AG04449 (cell line): ENCODE measurements at regions of chr12 and their contacts with region 1.

Region 1: GRCh38 chr12:9750276-9751203 is 10.2 kb downstream of the CD69 start:
- DNase-seq: no peak
- H3K4me3 ChIP-seq: no peak overlapping the region
- CTCF ChIP-seq: peak; percentile 67

Region 2: GRCh38 chr12:9721394-9722092 is 29.0 kb before region 1 on chr12:
- CTCF ChIA-PET with region 1: interaction called, 10 read pairs
- POLR2A ChIA-PET with region 1: no interaction called
- DNase-seq: no peak
- H3K4me3 ChIP-seq: no peak overlapping the region
- CTCF ChIP-seq: no peak

Region 3: DNA sequence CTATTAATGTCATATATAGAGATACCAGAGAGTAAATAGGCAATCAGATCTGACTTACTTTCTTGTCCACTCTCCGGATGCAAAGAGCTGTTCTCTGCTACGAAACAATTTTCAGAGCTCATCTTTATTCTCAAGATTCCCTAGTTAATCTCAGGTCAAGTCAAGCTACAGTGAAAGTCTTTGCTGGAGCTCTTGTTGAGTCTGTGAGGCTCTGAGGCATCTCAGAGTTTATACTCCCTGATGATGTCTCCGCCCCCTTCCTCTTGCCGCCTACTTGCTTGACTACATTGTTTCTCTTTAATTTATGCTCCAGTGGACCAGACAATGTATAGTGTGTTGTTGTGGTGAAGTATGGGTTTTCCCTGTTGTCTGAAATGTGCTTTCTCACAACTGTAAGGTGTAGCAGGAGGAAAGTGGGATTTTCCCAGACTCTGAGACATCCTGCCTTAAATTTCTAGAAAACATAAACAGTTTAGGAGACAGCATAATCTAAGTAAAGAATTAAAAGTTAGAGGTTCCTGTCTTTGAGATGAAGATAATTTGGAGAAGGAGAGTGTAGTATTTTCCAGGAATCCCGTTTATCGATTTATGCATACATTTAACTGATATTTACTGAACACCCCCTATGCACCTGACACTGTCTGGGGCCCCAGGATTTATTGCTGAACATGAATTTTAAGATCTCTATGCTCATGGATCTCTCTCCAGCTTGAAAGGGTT is 10.3 kb after region 1 on chr12 and contains the start of gene CD69:
- CTCF ChIA-PET with region 1: interaction called, 66 read pairs
- POLR2A ChIA-PET with region 1: no interaction called
- DNase-seq: no peak
- H3K4me3 ChIP-seq: no peak within 1 kb of the TSS
- CTCF ChIP-seq: no peak

Region 4: GRCh38 chr12:9784816-9785215 is 34.3 kb after region 1 on chr12:
- CTCF ChIA-PET with region 1: no interaction called
- POLR2A ChIA-PET with region 1: no interaction called
- DNase-seq: no peak
- H3K4me3 ChIP-seq: no peak overlapping the region
- CTCF ChIP-seq: no peak

Region 5: GRCh38 chr12:9797722-9798619 is 47.4 kb after region 1 on chr12:
- CTCF ChIA-PET with region 1: interaction called, 12 read pairs
- POLR2A ChIA-PET with region 1: no interaction called
- DNase-seq: no peak
- H3K4me3 ChIP-seq: no peak overlapping the region
- CTCF ChIP-seq: peak; percentile 13

Region 6: DNA sequence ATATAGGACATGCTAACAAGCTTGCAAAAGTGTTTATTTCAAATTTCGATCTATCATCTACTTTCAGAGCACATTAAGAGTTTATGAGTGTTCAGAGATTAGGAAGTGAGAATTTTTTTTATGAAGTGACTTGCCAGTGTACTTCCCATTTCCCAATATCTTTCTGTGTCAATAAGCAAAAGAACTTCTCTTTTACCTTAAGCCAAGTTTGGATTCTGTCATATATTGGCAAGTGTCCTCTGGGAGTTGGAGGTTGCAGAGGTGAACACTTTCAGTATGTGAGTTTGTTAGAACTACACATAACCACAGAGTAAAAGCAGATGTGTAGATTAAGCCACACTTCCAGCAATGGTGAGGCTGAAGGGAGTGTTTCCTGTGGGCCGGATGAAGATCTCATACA is 60.1 kb after region 1 on chr12:
- CTCF ChIA-PET with region 1: no interaction called
- POLR2A ChIA-PET with region 1: no interaction called
- DNase-seq: no peak
- H3K4me3 ChIP-seq: no peak overlapping the region
- CTCF ChIP-seq: no peak

Region 7: GRCh38 chr12:9932270-9932669 is 181.7 kb after region 1 on chr12 and contains the start of gene CLEC2A:
- CTCF ChIA-PET with region 1: interaction called, 67 read pairs
- POLR2A ChIA-PET with region 1: no interaction called
- DNase-seq: no peak
- H3K4me3 ChIP-seq: no peak within 1 kb of the TSS
- CTCF ChIP-seq: no peak

Region 8: GRCh38 chr12:10140001-10140400 is 389.5 kb after region 1 on chr12:
- CTCF ChIA-PET with region 1: interaction called, 76 read pairs
- POLR2A ChIA-PET with region 1: no interaction called
- DNase-seq: no peak
- H3K4me3 ChIP-seq: no peak overlapping the region
- CTCF ChIP-seq: peak; percentile 39